ENCODE measurements at regions of chr9 and their contacts with region 1.

Region 1: GRCh38 chr9:22452415-22453010 is 5.9 kb downstream of the DMRTA1 start:
- DNase-seq: peak; percentile 26
- H3K4me3 ChIP-seq: no peak overlapping the region
- H3K27ac ChIP-seq: no peak overlapping the region
- H3K4me1 ChIP-seq: peaks cover 6% of the 10 kb centered on the region
- H3K27me3 ChIP-seq: peaks cover 22% of the 10 kb centered on the region
- CTCF ChIP-seq: peak; percentile 87

Region 2: DNA sequence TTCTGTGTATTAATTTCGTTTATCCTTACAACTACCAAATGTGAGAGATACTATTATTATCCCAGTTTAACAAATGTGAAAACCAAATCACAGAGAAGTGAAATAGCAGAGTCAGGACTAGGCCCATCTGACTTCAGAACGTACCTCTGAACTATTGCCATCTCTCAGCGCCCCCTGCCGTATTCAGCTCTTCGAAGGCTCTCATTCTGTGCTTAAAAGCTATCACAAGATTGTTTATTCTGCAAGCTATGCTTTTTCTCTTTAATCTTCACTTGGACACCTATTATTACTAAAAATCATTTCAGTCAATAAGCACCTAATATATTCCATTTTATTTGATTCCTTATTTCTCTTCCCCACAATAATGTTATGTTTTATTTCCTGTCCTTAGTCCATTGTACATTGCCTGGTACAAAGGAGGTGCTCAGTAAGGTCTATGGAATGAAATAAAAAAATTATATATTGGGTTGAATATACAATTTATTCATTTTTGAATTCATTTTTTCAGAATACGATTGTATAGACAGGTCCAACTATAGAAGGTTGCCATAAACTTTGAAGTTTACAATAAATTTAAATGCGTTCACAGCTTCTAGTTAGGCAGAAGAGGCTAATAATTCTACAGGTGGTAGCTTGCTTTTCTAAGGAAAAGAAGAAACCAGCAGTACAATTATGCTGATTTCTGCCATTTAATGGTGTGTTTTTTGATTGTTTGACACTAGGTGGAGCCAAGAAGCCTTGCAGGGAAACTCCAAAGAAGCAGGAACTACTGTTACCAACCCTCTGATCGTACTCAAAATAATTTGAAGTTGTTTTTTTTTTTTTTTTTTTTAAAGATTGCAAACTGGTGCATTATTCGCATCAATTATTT is 208.1 kb before region 1 on chr9:
- intact Hi-C with region 1: loop called (anchors 10 kb)
- DNase-seq: no peak
- H3K4me3 ChIP-seq: peak overlapping the region; percentile 7
- H3K27ac ChIP-seq: no peak overlapping the region
- H3K4me1 ChIP-seq: no peaks in the 10 kb centered on the region
- H3K27me3 ChIP-seq: no peaks in the 10 kb centered on the region
- CTCF ChIP-seq: peak; percentile 56

Region 3: GRCh38 chr9:22307013-22307711 is 145.4 kb before region 1 on chr9:
- intact Hi-C with region 1: loop called (anchors 2 kb)
- DNase-seq: no peak
- H3K4me3 ChIP-seq: no peak overlapping the region
- H3K27ac ChIP-seq: no peak overlapping the region
- H3K4me1 ChIP-seq: no peaks in the 10 kb centered on the region
- H3K27me3 ChIP-seq: peaks cover 22% of the 10 kb centered on the region
- CTCF ChIP-seq: peak; percentile 70

Region 4: DNA sequence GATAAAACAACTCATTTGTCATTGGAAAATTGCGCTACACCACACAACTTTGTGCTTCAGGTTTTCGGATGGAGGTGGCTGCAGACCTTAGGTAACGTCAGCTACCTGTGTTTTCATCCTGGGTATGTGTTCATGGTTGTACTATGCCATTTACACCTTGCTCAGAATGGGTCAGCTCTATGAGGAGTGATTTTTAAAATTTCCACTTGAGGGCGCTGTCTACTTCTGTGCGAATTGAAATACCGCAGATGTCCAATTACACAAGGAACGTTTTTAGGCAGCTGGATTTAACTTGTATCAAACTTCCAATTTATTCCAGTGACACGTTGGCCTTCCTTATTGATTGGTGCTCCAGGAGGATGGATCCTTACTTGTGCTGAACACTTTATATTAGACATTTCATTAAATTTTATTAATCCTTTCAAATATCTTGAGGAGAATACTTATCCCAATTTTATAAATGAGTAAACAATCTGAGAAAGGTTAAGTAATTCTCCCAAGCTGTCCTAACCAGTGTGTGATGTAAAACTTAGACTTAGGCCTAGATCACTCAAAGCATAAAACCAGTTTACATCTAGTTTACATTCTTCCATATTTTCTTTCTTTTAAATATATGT is 17.5 kb after region 1 on chr9:
- intact Hi-C with region 1: no loop called
- DNase-seq: no peak
- H3K4me3 ChIP-seq: no peak overlapping the region
- H3K27ac ChIP-seq: no peak overlapping the region
- H3K4me1 ChIP-seq: no peaks in the 10 kb centered on the region
- H3K27me3 ChIP-seq: peaks cover 5% of the 10 kb centered on the region
- CTCF ChIP-seq: peak; percentile 71

Measured in left ventricle myocardium inferior (tissue), 1 donor.